ENCODE measurements at regions of chr11 and their contacts with region 1.

Region 1: DNA sequence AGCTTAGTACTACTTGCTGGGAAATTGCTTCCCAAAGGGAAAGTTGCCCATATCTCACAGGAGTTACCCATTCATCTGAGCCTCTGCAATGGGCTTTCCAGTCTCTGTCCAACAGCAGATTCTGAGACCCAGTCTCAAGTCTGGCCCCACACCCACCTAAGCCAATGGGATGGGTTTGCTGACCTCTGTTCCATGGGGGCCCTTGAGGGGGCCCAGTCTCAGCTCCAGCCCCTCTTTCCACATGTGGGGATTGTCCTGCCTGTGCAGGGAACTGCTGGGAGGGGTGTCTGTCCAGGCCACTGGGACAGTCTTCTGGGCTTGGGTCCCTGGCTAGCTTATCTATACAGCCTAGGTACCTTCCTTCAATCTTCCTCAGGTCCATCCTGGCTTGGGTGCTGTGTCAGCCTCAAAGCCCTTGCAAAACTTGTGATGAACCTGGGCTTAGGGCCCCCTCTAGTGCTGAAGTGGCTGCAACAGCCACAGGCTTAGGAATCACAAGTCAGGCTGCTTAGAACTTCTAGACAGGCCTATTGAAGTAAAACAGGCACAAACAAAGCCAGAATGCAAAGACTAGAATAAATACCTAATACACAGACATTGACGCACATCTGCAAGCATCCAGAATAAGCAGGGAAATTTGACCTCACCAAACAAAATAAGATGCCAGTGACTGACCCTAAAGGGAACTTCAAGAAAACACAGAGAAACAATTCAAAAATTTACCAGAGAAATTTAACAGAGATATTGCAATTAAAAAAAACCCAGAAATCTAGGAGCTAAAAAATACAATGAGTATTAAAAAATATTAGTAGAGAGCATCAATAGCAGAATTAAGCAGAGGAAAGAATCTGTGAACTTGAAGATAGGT is 11.7 kb upstream of the PATL1 start:
- DNase-seq: peak; percentile 54 to 92 (median 70)
- ATAC-seq: peak; percentile 100
- H3K4me3 ChIP-seq: no peak overlapping the region
- H3K27ac ChIP-seq: peak overlapping the region; percentile 8; the same call in 1 of the 3 replicates
- H3K4me1 ChIP-seq: peaks cover 11 to 15% of the 10 kb centered on the region in 2 experiments; a peak in 4 of 5 replicates
- H3K27me3 ChIP-seq: no peaks in the 10 kb centered on the region
- CTCF ChIP-seq: peak; percentile 88 to 92 (median 88)
- EP300 ChIP-seq: no peak
- POLR2A ChIP-seq: no peak
- RAD21 ChIP-seq: peak; percentile 82 to 93

Region 2: GRCh38 chr11:59088162-59088561 is 592.4 kb before region 1 on chr11:
- CTCF ChIA-PET with region 1: no interaction called
- POLR2A ChIA-PET with region 1: no interaction called
- in situ Hi-C with region 1: no loop called
- intact Hi-C with region 1: no loop called
- DNase-seq: no peak
- ATAC-seq: no peak
- H3K4me3 ChIP-seq: no peak overlapping the region
- H3K27ac ChIP-seq: no peak overlapping the region
- H3K4me1 ChIP-seq: no peaks in the 10 kb centered on the region
- H3K27me3 ChIP-seq: no peaks in the 10 kb centered on the region
- CTCF ChIP-seq: no peak
- EP300 ChIP-seq: no peak
- POLR2A ChIP-seq: no peak
- RAD21 ChIP-seq: no peak

Region 3: GRCh38 chr11:59171508-59172322 is 508.8 kb before region 1 on chr11 and contains the start of gene DTX4:
- CTCF ChIA-PET with region 1: interaction called, 11 read pairs
- POLR2A ChIA-PET with region 1: no interaction called
- in situ Hi-C with region 1: loop called (anchors 25 kb)
- intact Hi-C with region 1: loop called (anchors 2 kb)
- DNase-seq: peak; percentile 87 to 95 (median 92)
- ATAC-seq: peak; percentile 98
- H3K4me3 ChIP-seq: peak within 1 kb of the TSS; percentile 39
- H3K27ac ChIP-seq: peak within 1 kb of the TSS; percentile 54; the same call in 1 of the 3 replicates
- H3K4me1 ChIP-seq: peaks cover 0 to 20% of the 10 kb centered on the region in 2 experiments; a peak in 3 of 5 replicates
- H3K27me3 ChIP-seq: peaks cover 14 to 32% of the 10 kb centered on the region in 2 experiments
- CTCF ChIP-seq: peak; percentile 90 to 98 (median 95)
- EP300 ChIP-seq: no peak
- POLR2A ChIP-seq: no peak
- RAD21 ChIP-seq: peak; percentile 79 to 84
- polyA plus RNA-seq, gene DTX4: 0.03 TPM in 1 of 2 experiments, not detected in the other

Region 4: GRCh38 chr11:59186130-59186594 is 494.4 kb before region 1 on chr11:
- CTCF ChIA-PET with region 1: no interaction called
- POLR2A ChIA-PET with region 1: no interaction called
- in situ Hi-C with region 1: loop called (anchors 25 kb)
- intact Hi-C with region 1: no loop called
- DNase-seq: peak; percentile 66 to 84 (median 84)
- ATAC-seq: peak; percentile 96
- H3K4me3 ChIP-seq: no peak overlapping the region
- H3K27ac ChIP-seq: no peak overlapping the region
- H3K4me1 ChIP-seq: peaks cover 0 to 6% of the 10 kb centered on the region in 2 experiments; a peak in 1 of 5 replicates
- H3K27me3 ChIP-seq: peaks cover 2 to 43% of the 10 kb centered on the region in 2 experiments; a peak in 4 of 5 replicates
- CTCF ChIP-seq: peak; percentile 69 to 91 (median 73)
- EP300 ChIP-seq: no peak
- POLR2A ChIP-seq: no peak
- RAD21 ChIP-seq: peak; percentile 6 to 38; a peak in 2 of 4 replicates

Region 5: GRCh38 chr11:59207988-59208451 is 472.5 kb before region 1 on chr11:
- CTCF ChIA-PET with region 1: no interaction called
- POLR2A ChIA-PET with region 1: no interaction called
- in situ Hi-C with region 1: no loop called
- intact Hi-C with region 1: loop called (anchors 2 kb)
- DNase-seq: peak; percentile 30 to 56 (median 40)
- ATAC-seq: peak; percentile 82
- H3K4me3 ChIP-seq: no peak overlapping the region
- H3K27ac ChIP-seq: no peak overlapping the region
- H3K4me1 ChIP-seq: no peaks in the 10 kb centered on the region
- H3K27me3 ChIP-seq: peaks cover 4 to 37% of the 10 kb centered on the region in 2 experiments; a peak in 3 of 5 replicates
- CTCF ChIP-seq: peak; percentile 71 to 76 (median 71)
- EP300 ChIP-seq: no peak
- POLR2A ChIP-seq: no peak
- RAD21 ChIP-seq: peak; percentile 43 to 63

Region 6: DNA sequence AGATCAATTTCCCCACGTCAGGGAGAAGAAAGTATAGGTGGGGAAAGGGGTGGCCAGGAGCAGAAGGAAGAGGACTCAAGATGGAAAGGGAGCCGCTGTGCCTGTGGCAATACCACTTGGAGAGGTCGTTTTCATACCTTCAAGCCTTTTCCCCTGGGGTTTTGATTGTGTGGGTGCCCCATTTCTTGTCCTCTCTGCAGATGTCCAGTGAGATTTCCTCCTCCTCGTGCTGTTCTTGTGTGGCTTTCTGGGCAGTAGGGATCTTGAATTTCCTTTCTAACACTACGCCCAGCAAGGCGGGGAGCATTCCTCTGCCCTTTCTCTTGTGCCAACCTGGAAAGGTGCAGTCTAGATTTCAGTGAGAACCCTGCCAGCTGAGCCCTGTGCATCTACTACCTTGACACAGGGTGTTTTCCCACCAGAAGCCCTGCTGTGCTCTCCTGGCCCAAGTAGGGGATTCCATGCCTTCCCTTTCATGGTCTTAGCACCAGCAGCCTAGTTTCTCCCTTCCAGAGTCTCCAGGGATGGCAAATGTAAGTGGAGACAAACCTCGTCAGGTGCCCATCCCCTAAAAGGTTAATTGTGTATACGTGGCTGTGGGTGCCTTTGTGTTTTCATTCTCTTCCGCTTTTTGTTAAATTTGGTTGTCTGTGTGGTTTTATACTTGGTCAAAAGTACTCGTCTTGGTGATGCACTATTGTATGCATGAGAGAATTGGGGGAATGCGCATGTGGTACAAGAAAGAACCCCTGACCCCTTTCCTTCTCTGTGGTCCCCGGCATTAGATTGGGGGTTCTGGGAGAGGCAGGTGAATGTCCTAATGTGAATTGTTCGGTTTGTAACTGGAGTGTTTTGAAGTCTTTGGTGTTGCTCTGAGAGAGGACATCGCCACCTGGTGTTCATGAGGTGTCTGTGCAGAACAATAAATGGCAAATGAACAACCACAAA is 396.4 kb before region 1 on chr11:
- CTCF ChIA-PET with region 1: no interaction called
- POLR2A ChIA-PET with region 1: no interaction called
- in situ Hi-C with region 1: no loop called
- intact Hi-C with region 1: loop called (anchors 2 kb)
- DNase-seq: peak; percentile 31 to 52 (median 40)
- ATAC-seq: peak; percentile 83
- H3K4me3 ChIP-seq: no peak overlapping the region
- H3K27ac ChIP-seq: no peak overlapping the region
- H3K4me1 ChIP-seq: no peaks in the 10 kb centered on the region
- H3K27me3 ChIP-seq: no peaks in the 10 kb centered on the region
- CTCF ChIP-seq: peak; percentile 67 to 78 (median 75)
- EP300 ChIP-seq: no peak
- POLR2A ChIP-seq: no peak
- RAD21 ChIP-seq: peak; percentile 54 to 72

Region 7: DNA sequence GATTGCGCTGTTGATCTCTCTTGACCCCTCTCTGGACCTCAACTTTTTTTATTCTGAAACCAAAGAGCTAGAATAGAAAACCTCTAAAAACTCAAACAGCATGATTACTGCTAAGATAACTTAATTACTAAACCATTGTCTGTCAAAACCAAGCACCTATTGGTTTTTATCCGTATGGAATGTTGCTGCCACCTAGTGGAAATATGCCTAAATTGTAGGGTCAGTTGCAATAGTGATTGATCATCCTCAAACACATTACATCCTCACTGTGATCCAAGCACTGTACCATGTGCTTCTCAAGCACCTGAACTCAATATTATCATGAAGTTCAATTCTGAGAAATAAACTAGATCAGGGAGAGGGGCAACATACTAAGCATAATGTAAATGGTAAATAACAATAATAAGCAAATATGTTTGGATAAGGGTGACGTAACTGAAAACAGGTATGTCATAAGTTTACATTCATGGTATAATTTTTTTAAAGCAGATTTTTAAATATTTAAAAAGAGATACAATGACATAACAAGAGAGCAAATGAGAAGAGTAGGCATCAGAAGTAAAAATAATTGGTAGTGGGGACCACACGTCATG is 250.5 kb before region 1 on chr11:
- CTCF ChIA-PET with region 1: no interaction called
- POLR2A ChIA-PET with region 1: no interaction called
- in situ Hi-C with region 1: no loop called
- intact Hi-C with region 1: loop called (anchors 2 kb)
- DNase-seq: peak; percentile 56 to 68 (median 66)
- ATAC-seq: peak; percentile 86
- H3K4me3 ChIP-seq: no peak overlapping the region
- H3K27ac ChIP-seq: no peak overlapping the region
- H3K4me1 ChIP-seq: no peaks in the 10 kb centered on the region
- H3K27me3 ChIP-seq: no peaks in the 10 kb centered on the region
- CTCF ChIP-seq: peak; percentile 57 to 88 (median 76); a peak in 5 of 6 replicates
- EP300 ChIP-seq: no peak
- POLR2A ChIP-seq: no peak
- RAD21 ChIP-seq: peak; percentile 64 to 81

Region 8: GRCh38 chr11:59802639-59803176 is 122.2 kb after region 1 on chr11:
- CTCF ChIA-PET with region 1: no interaction called
- POLR2A ChIA-PET with region 1: no interaction called
- in situ Hi-C with region 1: no loop called
- intact Hi-C with region 1: loop called (anchors 2 kb)
- DNase-seq: peak; percentile 39 to 74 (median 54)
- ATAC-seq: peak; percentile 61
- H3K4me3 ChIP-seq: no peak overlapping the region
- H3K27ac ChIP-seq: no peak overlapping the region
- H3K4me1 ChIP-seq: no peaks in the 10 kb centered on the region; a peak in 1 of 5 replicates
- H3K27me3 ChIP-seq: no peaks in the 10 kb centered on the region
- CTCF ChIP-seq: peak; percentile 63 to 88 (median 63)
- EP300 ChIP-seq: no peak
- POLR2A ChIP-seq: no peak
- RAD21 ChIP-seq: peak; percentile 85 to 86